Posterior cingulate gyrus (tissue), 11 donors: ENCODE measurements at regions of chr16 and their contacts with region 1.

Region 1: DNA sequence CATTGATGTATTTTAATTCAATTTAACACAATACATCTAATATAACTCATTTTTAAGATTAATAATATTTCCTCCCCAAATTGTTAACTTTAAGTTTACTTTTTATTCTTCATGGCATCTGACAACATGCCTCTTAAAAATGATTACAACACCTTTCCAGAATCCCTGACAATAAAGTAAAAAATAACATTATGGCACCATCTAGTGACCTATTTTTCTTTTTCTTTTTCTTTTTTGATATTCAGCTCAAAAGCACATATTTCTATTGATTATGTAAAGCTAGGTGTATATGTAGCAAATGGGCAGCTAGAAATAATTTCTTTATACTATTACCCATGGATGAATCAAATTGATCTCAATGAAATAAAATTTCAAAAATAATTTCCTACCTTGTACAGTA is 834.3 kb upstream of the CDH8 start:
- DNase-seq: no peak

Region 2: DNA sequence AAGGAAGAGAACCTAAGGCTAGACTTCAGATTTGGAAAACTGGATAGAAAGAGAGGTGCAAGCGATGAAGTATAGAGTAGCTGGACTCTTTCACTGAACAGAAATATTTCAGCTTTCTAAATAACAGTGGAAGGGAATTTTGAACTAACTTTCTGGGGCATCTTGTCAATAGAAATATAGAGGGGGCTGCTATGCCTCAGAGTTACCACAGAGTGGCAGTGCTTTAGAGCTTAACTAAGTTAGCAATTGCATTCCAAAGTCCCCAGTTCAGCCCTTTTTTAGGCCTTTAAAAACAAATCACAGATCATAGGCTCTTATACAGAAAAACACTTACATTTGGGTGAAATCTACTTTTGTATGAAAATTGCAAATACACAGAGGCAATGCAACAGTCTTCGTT is 680.1 kb before region 1 on chr16:
- intact Hi-C with region 1: loop called (anchors 5 kb)
- DNase-seq: no peak

Region 3: DNA sequence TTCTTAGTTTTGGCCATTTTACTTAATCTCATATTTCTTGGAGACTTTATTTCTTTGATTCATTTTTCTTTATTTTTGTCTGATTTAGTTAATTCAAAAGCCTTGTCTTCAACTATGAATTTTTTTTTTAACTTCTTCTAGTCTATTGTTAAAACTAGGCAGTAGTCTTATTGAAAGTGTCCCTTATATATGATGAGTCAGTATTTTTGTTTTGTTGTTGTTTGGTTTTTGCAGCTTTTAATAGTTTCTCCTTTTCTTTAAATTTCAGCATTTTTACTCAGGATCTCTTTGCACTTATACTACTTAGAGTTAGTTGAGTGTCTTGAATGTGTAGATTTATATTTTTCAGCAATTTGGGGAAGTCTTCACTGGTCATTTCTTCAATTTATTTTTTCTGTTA is 75.8 kb before region 1 on chr16:
- intact Hi-C with region 1: no loop called
- DNase-seq: no peak

Region 4: DNA sequence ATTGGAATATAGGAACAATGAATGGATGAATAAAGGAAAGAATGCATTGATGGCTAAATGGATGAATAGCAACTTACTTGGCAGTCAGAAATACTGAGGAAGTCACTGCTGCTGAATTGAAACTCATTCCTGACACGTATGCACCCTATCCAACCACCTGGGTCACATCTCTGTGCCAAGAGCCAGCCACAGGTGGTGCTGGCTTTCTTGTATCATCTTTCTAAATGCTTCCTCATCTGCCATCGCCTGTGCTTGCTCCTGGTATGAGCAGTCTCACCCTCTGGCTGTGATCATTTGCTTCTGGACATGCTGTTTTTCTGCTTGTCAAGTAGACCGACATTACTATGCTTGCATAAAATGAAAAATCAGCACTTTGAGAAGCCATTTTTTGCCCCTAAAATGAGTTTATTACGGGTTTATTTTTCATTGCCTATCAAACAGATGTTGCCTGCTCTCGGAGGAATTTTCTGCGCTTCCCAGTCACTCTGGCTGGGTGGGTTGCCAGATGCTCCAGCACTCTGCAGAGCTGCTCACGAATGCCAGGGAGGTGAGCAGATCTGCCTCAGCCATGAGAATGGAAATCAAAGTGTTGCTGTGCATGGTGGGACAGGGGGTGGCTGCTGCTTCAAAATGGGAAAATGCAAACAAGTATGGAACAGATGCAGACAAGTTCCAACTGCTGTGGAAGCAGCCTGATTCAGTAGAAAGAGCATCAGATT is 515.3 kb after region 1 on chr16:
- intact Hi-C with region 1: no loop called
- DNase-seq: peak in 2 of 10 donors; percentile 41 to 61